HCT116 (cell line): ENCODE measurements at regions of chr9 and their contacts with region 1.

Region 1: GRCh38 chr9:33703430-33704102 is 91.8 kb upstream of the PRSS3 start:
- DNase-seq: no peak
- ATAC-seq: no peak
- H3K4me3 ChIP-seq: no peak overlapping the region
- H3K27ac ChIP-seq: no peak overlapping the region
- H3K4me1 ChIP-seq: no peaks in the 10 kb centered on the region
- H3K27me3 ChIP-seq: no peaks in the 10 kb centered on the region
- CTCF ChIP-seq: no peak
- POLR2A ChIP-seq: no peak
- RAD21 ChIP-seq: no peak

Region 2: GRCh38 chr9:33638391-33638915 is 65.1 kb before region 1 on chr9:
- CTCF ChIA-PET with region 1: no interaction called
- POLR2A ChIA-PET with region 1: no interaction called
- RAD21 ChIA-PET with region 1: no interaction called
- intact Hi-C with region 1: no loop called
- DNase-seq: no peak
- ATAC-seq: peak; percentile 72
- H3K4me3 ChIP-seq: no peak overlapping the region
- H3K27ac ChIP-seq: no peak overlapping the region
- H3K4me1 ChIP-seq: no peaks in the 10 kb centered on the region
- H3K27me3 ChIP-seq: peaks cover 44% of the 10 kb centered on the region
- CTCF ChIP-seq: 0 out of 6 replicates have a peak, but pooled peaks of 1 of the 3 experiments have one; percentile 5
- POLR2A ChIP-seq: no peak
- RAD21 ChIP-seq: no peak

Region 3: DNA sequence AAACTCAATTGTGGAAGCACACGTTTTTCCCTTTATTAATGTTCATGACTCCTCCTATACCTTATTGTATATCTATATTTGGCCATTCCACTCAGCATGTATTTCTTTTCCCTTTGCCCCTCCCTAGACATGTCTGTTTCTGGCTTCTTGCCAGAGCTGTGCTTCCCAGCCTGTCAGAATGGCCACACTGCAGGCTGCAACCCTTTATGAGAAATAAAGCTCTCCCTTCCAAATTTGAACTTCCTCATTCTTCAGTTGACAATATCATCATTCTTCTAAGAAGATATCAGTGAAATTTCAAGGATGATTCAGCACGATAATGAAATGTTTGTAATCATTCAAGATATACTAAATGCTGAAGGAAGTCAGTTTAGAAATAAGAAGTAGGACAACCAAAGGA is 15.8 kb before region 1 on chr9:
- CTCF ChIA-PET with region 1: no interaction called
- POLR2A ChIA-PET with region 1: no interaction called
- RAD21 ChIA-PET with region 1: no interaction called
- intact Hi-C with region 1: loop called (anchors 1 kb)
- DNase-seq: no peak
- ATAC-seq: no peak
- H3K4me3 ChIP-seq: no peak overlapping the region
- H3K27ac ChIP-seq: no peak overlapping the region
- H3K4me1 ChIP-seq: no peaks in the 10 kb centered on the region
- H3K27me3 ChIP-seq: no peaks in the 10 kb centered on the region
- CTCF ChIP-seq: no peak
- POLR2A ChIP-seq: no peak
- RAD21 ChIP-seq: no peak

Region 4: GRCh38 chr9:34664281-34665066 is 960.9 kb after region 1 on chr9:
- CTCF ChIA-PET with region 1: no interaction called
- POLR2A ChIA-PET with region 1: no interaction called
- RAD21 ChIA-PET with region 1: no interaction called
- intact Hi-C with region 1: no loop called
- DNase-seq: peak; percentile 75
- ATAC-seq: peak; percentile 71
- H3K4me3 ChIP-seq: peak overlapping the region; percentile 48 to 91
- H3K27ac ChIP-seq: peak overlapping the region; percentile 36
- H3K4me1 ChIP-seq: peaks cover 10 to 33% of the 10 kb centered on the region in 2 experiments
- H3K27me3 ChIP-seq: no peaks in the 10 kb centered on the region
- CTCF ChIP-seq: peak; percentile 95 to 98 (median 97)
- POLR2A ChIP-seq: no peak
- RAD21 ChIP-seq: no peak; the same call in 1 of the 2 replicates